A549 (cell line): ENCODE measurements at regions of chr1 and their contacts with region 1.

Region 1: DNA sequence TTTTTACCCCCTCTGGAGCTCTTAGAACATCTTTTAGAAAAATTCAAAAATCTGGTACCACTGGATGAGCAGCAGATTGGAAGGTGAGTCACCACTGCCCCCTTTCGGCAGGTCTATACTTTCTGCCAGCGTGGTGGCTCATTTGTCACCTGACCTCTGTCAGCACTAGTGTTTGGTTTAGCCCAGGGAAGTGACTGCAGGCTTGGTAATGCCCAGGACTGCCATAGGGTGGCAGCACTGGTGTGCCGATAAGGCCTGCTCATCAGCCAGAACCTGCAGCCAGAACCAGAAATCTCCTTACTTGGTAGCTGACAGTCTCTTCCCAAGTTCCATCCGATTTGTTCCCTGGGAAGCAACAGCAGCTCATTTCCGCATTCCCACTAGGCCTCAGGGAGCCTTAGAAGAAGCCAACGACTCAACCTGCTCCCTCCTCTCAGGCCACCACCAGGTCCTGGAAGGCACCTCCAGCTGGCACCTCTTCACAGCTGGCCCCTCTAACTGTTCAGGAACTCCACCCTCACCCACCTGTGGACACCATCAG is 6.8 kb downstream of the SMIM12 start:
- DNase-seq: peak; percentile 86 to 93
- ATAC-seq: peak; percentile 99 to 100
- H3K4me3 ChIP-seq: no peak overlapping the region
- H3K27ac ChIP-seq: no peak overlapping the region
- H3K4me1 ChIP-seq: no peaks in the 10 kb centered on the region
- CTCF ChIP-seq: peak; percentile 82
- EP300 ChIP-seq: no peak
- POLR2A ChIP-seq: no peak
- RAD21 ChIP-seq: peak; percentile 66 to 68

Region 2: GRCh38 chr1:34547043-34547674 is 305.6 kb before region 1 on chr1:
- CTCF ChIA-PET with region 1: no interaction called
- POLR2A ChIA-PET with region 1: no interaction called
- DNase-seq: peak in 1 of 2 experiments; percentile 3
- ATAC-seq: no peak
- H3K4me3 ChIP-seq: no peak overlapping the region
- H3K27ac ChIP-seq: no peak overlapping the region
- H3K4me1 ChIP-seq: no peaks in the 10 kb centered on the region
- CTCF ChIP-seq: no peak
- EP300 ChIP-seq: no peak
- POLR2A ChIP-seq: no peak
- RAD21 ChIP-seq: no peak

Region 3: GRCh38 chr1:34786521-34787325 is 66.0 kb before region 1 on chr1:
- CTCF ChIA-PET with region 1: interaction called, 34 read pairs
- POLR2A ChIA-PET with region 1: no interaction called
- DNase-seq: peak; percentile 52 to 58
- ATAC-seq: peak; percentile 75 to 89
- H3K4me3 ChIP-seq: no peak overlapping the region
- H3K27ac ChIP-seq: no peak overlapping the region
- H3K4me1 ChIP-seq: peaks cover 6% of the 10 kb centered on the region; the same call in 1 of the 3 replicates
- CTCF ChIP-seq: peak; percentile 71
- EP300 ChIP-seq: no peak
- POLR2A ChIP-seq: no peak
- RAD21 ChIP-seq: peak; percentile 63 to 73

Region 4: GRCh38 chr1:34806396-34806795 is 46.4 kb before region 1 on chr1:
- CTCF ChIA-PET with region 1: interaction called, 14 read pairs
- POLR2A ChIA-PET with region 1: no interaction called
- DNase-seq: no peak
- ATAC-seq: no peak
- H3K4me3 ChIP-seq: no peak overlapping the region
- H3K27ac ChIP-seq: no peak overlapping the region
- H3K4me1 ChIP-seq: peaks cover 4% of the 10 kb centered on the region; the same call in 1 of the 3 replicates
- CTCF ChIP-seq: no peak
- EP300 ChIP-seq: no peak
- POLR2A ChIP-seq: no peak
- RAD21 ChIP-seq: no peak

Region 5: GRCh38 chr1:34829250-34829649 is 23.5 kb before region 1 on chr1:
- CTCF ChIA-PET with region 1: interaction called, 28 read pairs
- POLR2A ChIA-PET with region 1: no interaction called
- DNase-seq: no peak
- ATAC-seq: no peak
- H3K4me3 ChIP-seq: no peak overlapping the region
- H3K27ac ChIP-seq: no peak overlapping the region
- H3K4me1 ChIP-seq: no peaks in the 10 kb centered on the region
- CTCF ChIP-seq: no peak
- EP300 ChIP-seq: no peak
- POLR2A ChIP-seq: no peak
- RAD21 ChIP-seq: no peak

Region 6: DNA sequence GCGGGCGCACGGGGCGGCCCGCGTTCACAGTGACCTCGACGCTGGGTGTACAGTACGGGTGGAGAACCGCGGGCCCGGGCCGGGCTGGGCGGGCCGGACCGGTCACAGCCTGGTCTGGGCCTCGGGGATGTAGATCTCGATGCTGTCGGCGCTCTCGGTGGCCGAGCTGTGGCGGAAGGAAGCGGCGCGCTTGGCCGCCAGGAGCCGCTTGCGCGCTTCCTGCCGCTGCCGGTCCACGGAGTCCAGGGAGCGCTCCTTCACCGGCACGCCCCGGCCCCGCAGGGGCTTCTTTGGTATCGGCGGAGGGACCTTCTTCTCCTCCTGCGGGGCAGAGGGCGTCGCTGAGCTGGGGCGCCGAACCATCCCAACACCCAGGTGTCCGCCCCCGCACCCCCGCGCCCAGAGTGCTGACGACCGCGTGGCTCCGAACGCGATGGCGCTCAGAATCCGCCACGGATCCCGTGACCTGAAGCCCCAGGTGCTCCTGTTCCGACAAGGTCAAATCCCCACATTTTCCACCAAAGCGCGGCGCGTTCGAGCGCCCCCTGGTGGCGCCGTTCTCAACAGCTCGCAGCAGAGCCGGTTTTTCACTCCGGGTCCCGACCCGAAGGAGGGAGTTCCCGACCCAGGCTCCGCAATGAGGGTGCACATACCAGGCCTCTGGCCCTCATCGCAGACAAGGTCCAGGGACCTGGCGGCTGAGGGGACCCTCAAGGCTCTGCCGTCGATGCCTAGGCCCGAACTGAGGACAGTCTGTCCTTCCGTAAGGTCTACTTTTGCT is 13.4 kb after region 1 on chr1:
- CTCF ChIA-PET with region 1: interaction called, 45 read pairs
- POLR2A ChIA-PET with region 1: interaction called, 4 read pairs
- DNase-seq: peak; percentile 71 to 75
- ATAC-seq: peak; percentile 75 to 89
- H3K4me3 ChIP-seq: peak overlapping the region; percentile 50
- H3K27ac ChIP-seq: peak overlapping the region; percentile 72 to 91
- H3K4me1 ChIP-seq: 0 out of 3 replicates have a peak, but pooled peaks cover 3% of the 10 kb centered on the region
- CTCF ChIP-seq: peak; percentile 88
- EP300 ChIP-seq: no peak
- POLR2A ChIP-seq: no peak
- RAD21 ChIP-seq: peak; percentile 27 to 40; a peak in 2 of 5 replicates

Region 7: DNA sequence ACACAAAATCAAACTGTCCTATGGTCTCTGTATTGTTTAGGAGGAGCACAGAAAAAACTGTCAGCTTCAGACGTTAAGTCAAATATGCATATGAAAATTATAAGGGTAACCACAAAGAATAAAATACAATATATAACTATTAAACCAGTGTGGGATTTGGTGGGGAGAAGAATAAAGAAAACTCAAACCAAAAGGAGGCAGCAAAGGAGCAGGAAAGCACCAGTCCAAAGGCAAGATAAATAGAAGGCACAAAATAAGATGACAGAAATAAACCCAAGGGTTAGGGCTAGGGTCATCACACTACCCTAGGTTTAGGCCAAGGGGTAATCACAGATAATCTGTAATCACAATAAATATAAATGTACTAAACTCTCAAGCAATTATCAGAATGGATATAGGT is 43.9 kb after region 1 on chr1:
- CTCF ChIA-PET with region 1: no interaction called
- POLR2A ChIA-PET with region 1: no interaction called
- DNase-seq: no peak
- ATAC-seq: no peak
- H3K4me3 ChIP-seq: no peak overlapping the region
- H3K27ac ChIP-seq: no peak overlapping the region
- H3K4me1 ChIP-seq: no peaks in the 10 kb centered on the region
- CTCF ChIP-seq: no peak
- EP300 ChIP-seq: no peak
- POLR2A ChIP-seq: no peak
- RAD21 ChIP-seq: peak in 1 of 2 experiments; percentile 23; a peak in 2 of 5 replicates

Region 8: DNA sequence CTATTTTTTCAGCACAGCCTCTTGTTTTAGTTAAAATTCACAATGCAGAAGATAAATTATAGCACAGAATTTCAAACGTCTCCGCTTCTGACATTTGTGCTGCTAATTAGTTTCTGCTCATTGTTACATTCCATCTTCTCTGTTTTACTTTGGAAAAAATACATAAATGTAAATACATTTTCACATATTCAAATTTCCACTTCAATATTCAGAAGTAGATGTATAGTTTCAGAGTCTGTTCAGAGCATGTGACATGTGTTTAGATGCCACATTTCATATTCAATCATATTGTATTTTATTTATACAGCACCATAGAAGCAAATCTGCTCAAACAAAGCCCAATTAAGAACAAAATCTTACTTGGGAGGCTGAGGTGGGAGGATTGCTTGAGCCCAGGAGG is 112.8 kb after region 1 on chr1:
- CTCF ChIA-PET with region 1: no interaction called
- POLR2A ChIA-PET with region 1: no interaction called
- DNase-seq: no peak
- ATAC-seq: no peak
- H3K4me3 ChIP-seq: no peak overlapping the region
- H3K27ac ChIP-seq: no peak overlapping the region
- H3K4me1 ChIP-seq: no peaks in the 10 kb centered on the region
- CTCF ChIP-seq: no peak
- EP300 ChIP-seq: no peak
- POLR2A ChIP-seq: no peak
- RAD21 ChIP-seq: no peak